ENCODE measurements at regions of chr11 and their contacts with region 1.

Region 1: DNA sequence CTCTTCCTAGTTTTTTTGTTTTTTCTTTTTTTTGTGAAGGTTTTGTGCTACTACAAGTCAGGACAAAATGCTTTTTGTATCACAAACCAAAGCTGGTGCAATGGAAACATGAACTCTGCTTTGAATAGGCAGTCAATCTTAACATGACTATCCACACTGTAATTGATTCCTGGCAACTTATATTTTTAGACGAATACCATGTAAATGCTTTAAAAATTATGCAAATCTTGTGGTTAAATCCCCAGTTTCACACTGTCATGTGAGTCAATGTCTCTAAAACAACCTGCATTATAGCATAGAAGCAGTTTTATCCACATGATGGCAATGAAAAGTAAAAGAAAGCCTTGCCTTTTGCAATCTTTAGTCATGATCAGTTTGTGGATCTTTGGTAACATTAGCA is 8.9 kb downstream of the TRPC6 start:
- DNase-seq: no peak
- H3K4me3 ChIP-seq: no peak overlapping the region
- H3K27ac ChIP-seq: no peak overlapping the region
- H3K4me1 ChIP-seq: no peaks in the 10 kb centered on the region
- H3K27me3 ChIP-seq: no peaks in the 10 kb centered on the region
- CTCF ChIP-seq: no peak
- POLR2A ChIP-seq: no peak

Region 2: GRCh38 chr11:101466352-101466751 is 108.5 kb before region 1 on chr11:
- intact Hi-C with region 1: loop called (anchors 5 kb)
- DNase-seq: no peak
- H3K4me3 ChIP-seq: no peak overlapping the region
- H3K27ac ChIP-seq: no peak overlapping the region
- H3K4me1 ChIP-seq: no peaks in the 10 kb centered on the region
- H3K27me3 ChIP-seq: no peaks in the 10 kb centered on the region
- CTCF ChIP-seq: no peak
- POLR2A ChIP-seq: no peak

Region 3: GRCh38 chr11:101516546-101516945 is 58.3 kb before region 1 on chr11:
- intact Hi-C with region 1: no loop called
- DNase-seq: no peak
- H3K4me3 ChIP-seq: no peak overlapping the region
- H3K27ac ChIP-seq: no peak overlapping the region
- H3K4me1 ChIP-seq: no peaks in the 10 kb centered on the region
- H3K27me3 ChIP-seq: no peaks in the 10 kb centered on the region
- CTCF ChIP-seq: no peak
- POLR2A ChIP-seq: no peak

Region 4: GRCh38 chr11:101661559-101661958 is 86.7 kb after region 1 on chr11:
- intact Hi-C with region 1: no loop called
- DNase-seq: no peak
- H3K4me3 ChIP-seq: no peak overlapping the region
- H3K27ac ChIP-seq: no peak overlapping the region
- H3K4me1 ChIP-seq: no peaks in the 10 kb centered on the region
- H3K27me3 ChIP-seq: no peaks in the 10 kb centered on the region
- CTCF ChIP-seq: no peak
- POLR2A ChIP-seq: no peak

Measured in breast epithelium (tissue), 4 donors.